Ovary (tissue), 10 donors: ENCODE measurements at regions of chr11 and their contacts with region 1.

Region 1: DNA sequence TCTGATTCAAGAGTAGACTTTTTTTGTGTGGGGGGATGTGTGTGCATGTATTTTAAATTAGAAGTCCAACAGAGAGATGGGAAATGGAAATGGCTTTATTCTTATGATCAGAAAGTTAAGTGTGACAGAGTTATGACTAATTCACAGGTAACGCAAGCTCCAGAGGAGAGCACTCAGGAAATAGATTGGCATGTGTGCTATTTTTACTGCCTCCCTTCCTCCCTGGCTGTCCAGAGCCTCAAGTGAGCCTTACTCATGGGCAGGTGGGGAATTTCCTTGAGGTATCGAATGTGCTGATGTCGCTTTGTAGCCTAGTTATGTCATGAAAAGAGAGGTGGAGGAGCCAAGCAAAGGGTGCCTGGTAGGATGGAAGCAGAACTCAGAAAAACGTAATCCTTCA is 70.3 kb upstream of the BDNF start:
- DNase-seq: no peak
- H3K4me3 ChIP-seq: no peak overlapping the region
- H3K27ac ChIP-seq: no peak overlapping the region
- H3K4me1 ChIP-seq: no peaks in the 10 kb centered on the region
- H3K27me3 ChIP-seq: no peaks in the 10 kb centered on the region
- CTCF ChIP-seq: no peak
- EP300 ChIP-seq: no peak
- POLR2A ChIP-seq: no peak

Region 2: DNA sequence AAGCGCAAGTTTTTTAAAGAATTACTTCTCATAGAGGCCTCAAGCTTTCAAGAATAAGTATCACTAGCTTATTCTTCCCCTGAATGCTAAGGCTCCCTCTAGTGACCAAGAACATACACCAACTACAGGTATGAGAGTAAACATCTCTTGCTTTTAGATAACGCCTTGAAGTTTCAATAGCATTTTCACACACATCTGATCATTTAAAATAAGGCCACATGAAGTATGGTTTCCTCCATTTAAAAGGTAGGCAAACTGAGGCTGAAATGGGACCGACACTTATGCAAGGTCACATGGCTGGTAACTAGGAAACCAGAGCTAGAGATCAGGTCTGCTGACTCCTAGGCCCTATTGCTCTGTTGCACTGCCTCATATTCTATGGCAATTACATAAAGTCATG is 474.1 kb before region 1 on chr11:
- intact Hi-C with region 1: no loop called
- DNase-seq: no peak
- H3K4me3 ChIP-seq: no peak overlapping the region
- H3K27ac ChIP-seq: no peak overlapping the region
- H3K4me1 ChIP-seq: no peaks in the 10 kb centered on the region
- H3K27me3 ChIP-seq: no peaks in the 10 kb centered on the region
- CTCF ChIP-seq: peak in 2 of 3 donors; percentile 36 to 48
- EP300 ChIP-seq: no peak
- POLR2A ChIP-seq: no peak

Region 3: DNA sequence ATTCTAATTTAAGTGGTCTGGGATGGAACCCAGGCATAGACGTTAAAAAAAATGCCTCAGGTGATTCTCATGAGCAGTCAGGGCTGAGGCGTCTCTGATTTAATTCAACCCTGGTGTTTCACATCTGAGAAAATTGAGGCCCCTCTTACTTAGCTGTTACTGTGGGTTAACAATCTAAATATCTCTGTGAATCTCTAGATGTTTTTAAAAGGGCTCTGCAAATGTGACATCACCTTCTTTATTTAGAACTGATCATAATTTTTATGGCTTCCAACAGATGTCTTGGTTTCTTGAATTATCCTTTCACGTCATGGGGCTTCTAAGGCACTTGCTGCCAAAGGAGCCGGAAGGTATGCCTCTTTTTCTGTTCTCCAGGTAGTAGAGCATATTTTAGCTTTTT is 188.0 kb before region 1 on chr11:
- intact Hi-C with region 1: no loop called
- DNase-seq: no peak
- H3K4me3 ChIP-seq: no peak overlapping the region
- H3K27ac ChIP-seq: no peak overlapping the region
- H3K4me1 ChIP-seq: no peaks in the 10 kb centered on the region
- H3K27me3 ChIP-seq: no peaks in the 10 kb centered on the region
- CTCF ChIP-seq: no peak
- EP300 ChIP-seq: no peak
- POLR2A ChIP-seq: no peak

Region 4: GRCh38 chr11:27722117-27722952 is 48.2 kb before region 1 on chr11:
- intact Hi-C with region 1: no loop called
- DNase-seq: no peak
- H3K4me3 ChIP-seq: peak overlapping the region; percentile 12
- H3K27ac ChIP-seq: no peak overlapping the region
- H3K4me1 ChIP-seq: peaks cover 14% of the 10 kb centered on the region
- H3K27me3 ChIP-seq: no peaks in the 10 kb centered on the region
- CTCF ChIP-seq: no peak
- EP300 ChIP-seq: no peak
- POLR2A ChIP-seq: no peak

Region 5: DNA sequence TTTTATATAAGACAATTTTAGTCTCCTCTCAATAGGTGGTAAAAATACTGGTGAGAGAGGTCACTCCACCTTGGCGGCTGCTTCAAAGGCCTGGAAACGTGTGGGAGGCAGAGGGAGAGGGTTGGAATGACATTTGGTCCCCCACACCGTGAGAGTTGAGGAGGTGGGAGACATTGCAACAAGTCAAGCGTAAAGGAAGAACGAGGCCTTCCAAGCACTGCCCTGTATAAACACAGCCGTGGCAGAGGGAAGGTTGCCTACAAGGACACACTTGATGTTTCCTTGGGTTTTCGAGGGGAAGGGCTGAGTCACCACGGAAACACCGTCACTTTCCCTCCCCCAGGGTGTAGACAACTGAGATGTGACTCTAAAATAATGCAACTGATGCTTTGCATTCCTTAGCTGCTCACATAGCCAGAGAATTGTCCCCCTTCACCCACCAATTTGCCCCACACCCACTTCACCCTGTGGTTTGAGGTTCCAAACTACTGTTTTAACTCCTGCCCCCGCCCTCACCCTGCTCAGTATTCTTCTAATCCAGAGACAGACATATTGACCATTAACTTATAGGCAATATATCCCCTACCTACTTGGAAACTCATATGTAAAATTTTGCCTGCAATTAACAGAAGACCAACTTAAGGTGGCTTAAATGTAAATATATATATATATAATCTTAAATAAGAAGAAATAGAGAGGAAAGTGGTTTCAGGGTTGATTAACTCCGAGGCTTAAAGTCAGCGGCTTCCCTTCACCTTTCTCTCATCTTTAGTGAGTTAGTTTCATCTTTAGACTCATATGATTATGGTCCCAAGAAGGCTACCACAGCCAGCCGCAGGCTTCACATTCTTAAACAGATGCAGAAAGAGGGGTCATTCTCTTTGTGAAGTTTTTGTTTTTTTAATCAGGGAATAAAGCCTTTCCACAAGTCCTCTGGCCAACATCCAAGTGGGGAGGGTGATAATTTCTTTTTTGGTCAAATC is 16.2 kb before region 1 on chr11:
- intact Hi-C with region 1: loop called in 1 of 4 experiments (anchors 1 kb)
- DNase-seq: no peak
- H3K4me3 ChIP-seq: no peak overlapping the region
- H3K27ac ChIP-seq: no peak overlapping the region
- H3K4me1 ChIP-seq: no peaks in the 10 kb centered on the region
- H3K27me3 ChIP-seq: no peaks in the 10 kb centered on the region
- CTCF ChIP-seq: no peak
- EP300 ChIP-seq: no peak
- POLR2A ChIP-seq: no peak

Region 6: DNA sequence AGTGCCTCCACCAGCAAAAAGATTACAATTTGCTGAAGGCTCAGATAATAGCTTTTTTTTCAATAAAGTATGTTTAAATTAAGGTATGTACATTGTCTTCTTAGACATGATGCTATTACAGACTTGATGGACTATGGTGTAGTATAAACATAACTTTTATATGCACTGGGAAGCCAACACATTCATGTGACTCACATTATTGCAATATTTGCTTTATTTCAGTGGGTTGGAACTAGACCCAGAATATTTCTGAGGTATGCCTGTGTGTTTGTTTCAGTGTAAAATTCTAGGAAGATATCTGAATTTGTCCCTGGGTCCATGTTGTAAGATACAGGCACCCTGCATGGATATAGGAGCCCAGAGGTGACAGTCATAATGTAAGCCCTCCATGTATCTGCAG is 49.7 kb after region 1 on chr11:
- intact Hi-C with region 1: loop called in 1 of 4 experiments (anchors 2 kb)
- DNase-seq: no peak
- H3K4me3 ChIP-seq: no peak overlapping the region
- H3K27ac ChIP-seq: no peak overlapping the region
- H3K4me1 ChIP-seq: no peaks in the 10 kb centered on the region
- H3K27me3 ChIP-seq: no peaks in the 10 kb centered on the region
- CTCF ChIP-seq: no peak
- EP300 ChIP-seq: no peak
- POLR2A ChIP-seq: no peak

Region 7: GRCh38 chr11:28107748-28108618 is 337.4 kb after region 1 on chr11 and contains the starts of genes KIF18A and METTL15:
- intact Hi-C with region 1: no loop called
- DNase-seq: peak; percentile 99 to 100 (median 100)
- H3K4me3 ChIP-seq: peak within 1 kb of the TSS; percentile 43
- H3K27ac ChIP-seq: peak within 1 kb of the TSS in 1 of 2 donors; percentile 75
- H3K4me1 ChIP-seq: no peaks in the 10 kb centered on the region
- H3K27me3 ChIP-seq: no peaks in the 10 kb centered on the region
- CTCF ChIP-seq: no peak
- EP300 ChIP-seq: no peak
- POLR2A ChIP-seq: peak; percentile 71
- total RNA-seq, gene KIF18A: 0.33 to 0.72 (median 0.43) TPM in 6 of 7 donors, not detected in the other
- total RNA-seq, gene METTL15: 10.1 to 14.9 (median 11.8) TPM

Region 8: DNA sequence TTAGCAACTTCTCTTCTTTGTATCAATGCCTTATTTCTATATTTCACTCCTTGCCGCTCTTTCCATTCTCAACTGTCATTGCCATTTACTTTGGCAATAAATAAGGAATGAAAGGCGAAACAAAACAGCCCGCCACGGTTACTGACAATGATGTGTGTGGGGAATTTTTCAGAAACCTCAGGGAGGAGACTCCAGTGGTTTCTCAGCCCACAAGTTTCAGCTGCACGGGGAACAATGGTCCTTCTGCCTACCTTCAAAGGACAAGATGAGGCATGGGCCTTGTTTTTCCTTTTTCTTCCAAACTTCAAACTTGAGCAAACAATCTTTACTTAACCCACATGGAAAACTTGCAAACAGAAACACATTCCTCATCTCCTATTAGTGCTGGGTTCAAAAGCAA is 747.0 kb after region 1 on chr11:
- intact Hi-C with region 1: loop called in 1 of 4 experiments (anchors 5 kb)
- DNase-seq: no peak
- H3K4me3 ChIP-seq: no peak overlapping the region
- H3K27ac ChIP-seq: no peak overlapping the region
- H3K4me1 ChIP-seq: peaks cover 6% of the 10 kb centered on the region
- H3K27me3 ChIP-seq: no peaks in the 10 kb centered on the region
- CTCF ChIP-seq: no peak
- EP300 ChIP-seq: no peak
- POLR2A ChIP-seq: no peak